ENCODE measurements at regions of chr13 and their contacts with region 1.

Region 1: DNA sequence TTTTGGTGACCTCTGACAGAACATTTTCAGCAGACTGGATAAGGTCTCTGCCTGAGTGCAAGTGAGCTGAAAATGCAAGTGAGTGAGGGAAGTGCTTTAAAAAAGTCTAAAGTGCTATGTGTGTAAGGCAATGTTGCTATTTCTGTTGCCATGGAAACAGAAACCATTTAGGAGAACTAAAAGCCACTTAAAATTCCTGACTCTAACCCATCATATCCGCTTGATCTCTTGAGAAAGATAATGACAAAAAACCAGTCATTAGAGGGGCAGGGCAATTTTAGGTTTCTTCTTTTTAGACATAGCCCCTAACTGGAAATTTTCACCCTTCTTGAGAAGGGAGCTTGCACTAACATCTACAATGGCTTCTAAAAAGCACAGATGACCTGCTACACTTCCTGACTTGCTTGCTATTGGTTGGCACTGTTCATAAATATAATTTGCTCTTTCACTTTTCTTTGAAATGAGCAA is at the start of gene CYSLTR2:
- DNase-seq: peak; percentile 28
- H3K4me3 Mint-ChIP-seq: peak within 1 kb of the TSS; percentile 79
- H3K27ac Mint-ChIP-seq: peak within 1 kb of the TSS; percentile 84
- H3K4me1 Mint-ChIP-seq: peaks cover 41% of the 10 kb centered on the region
- H3K27me3 Mint-ChIP-seq: no peaks in the 10 kb centered on the region
- total RNA-seq, gene CYSLTR2: 3.2 and 3.7 TPM in 2 replicates

Region 2: DNA sequence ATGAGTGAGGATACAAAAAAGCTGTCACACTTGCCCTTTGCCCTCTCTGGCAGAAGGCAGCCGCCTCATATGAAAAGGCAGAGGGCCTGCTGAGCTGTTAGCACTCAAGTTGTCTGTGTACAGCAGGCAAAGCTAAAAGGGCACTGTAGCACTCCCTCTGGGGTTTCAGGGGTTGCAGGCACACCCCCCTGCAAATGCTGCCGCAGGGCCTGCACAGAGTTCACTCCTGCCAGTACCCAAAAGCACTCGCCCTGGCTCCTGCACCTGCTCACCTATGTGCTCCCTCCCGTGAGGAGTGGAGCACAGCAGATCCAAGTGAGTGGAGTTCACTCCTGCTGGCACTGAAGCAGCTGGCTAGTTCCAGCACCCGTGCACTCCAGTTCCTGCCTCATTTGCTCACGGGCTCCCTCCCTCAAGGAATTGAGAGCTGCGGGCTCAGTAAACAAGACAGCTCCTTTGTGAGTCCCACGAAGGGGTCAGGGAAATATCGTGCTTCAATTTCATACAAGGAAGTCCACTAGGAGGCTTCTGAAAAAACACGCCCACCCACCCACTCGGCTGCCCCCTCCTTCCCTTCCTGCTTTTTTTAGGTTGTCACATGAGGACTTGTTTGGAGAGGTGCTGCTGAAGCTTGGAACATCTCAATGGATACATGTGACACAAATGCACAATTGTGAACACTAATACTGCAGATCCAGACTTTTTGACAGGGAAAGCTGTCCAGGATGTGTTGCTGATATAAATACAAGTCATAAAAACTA is 110.7 kb before region 1 on chr13:
- intact Hi-C with region 1: no loop called
- DNase-seq: no peak
- H3K4me3 Mint-ChIP-seq: no peak overlapping the region
- H3K27ac Mint-ChIP-seq: no peak overlapping the region
- H3K4me1 Mint-ChIP-seq: peaks cover 3% of the 10 kb centered on the region
- H3K27me3 Mint-ChIP-seq: peaks cover 17% of the 10 kb centered on the region

Region 3: DNA sequence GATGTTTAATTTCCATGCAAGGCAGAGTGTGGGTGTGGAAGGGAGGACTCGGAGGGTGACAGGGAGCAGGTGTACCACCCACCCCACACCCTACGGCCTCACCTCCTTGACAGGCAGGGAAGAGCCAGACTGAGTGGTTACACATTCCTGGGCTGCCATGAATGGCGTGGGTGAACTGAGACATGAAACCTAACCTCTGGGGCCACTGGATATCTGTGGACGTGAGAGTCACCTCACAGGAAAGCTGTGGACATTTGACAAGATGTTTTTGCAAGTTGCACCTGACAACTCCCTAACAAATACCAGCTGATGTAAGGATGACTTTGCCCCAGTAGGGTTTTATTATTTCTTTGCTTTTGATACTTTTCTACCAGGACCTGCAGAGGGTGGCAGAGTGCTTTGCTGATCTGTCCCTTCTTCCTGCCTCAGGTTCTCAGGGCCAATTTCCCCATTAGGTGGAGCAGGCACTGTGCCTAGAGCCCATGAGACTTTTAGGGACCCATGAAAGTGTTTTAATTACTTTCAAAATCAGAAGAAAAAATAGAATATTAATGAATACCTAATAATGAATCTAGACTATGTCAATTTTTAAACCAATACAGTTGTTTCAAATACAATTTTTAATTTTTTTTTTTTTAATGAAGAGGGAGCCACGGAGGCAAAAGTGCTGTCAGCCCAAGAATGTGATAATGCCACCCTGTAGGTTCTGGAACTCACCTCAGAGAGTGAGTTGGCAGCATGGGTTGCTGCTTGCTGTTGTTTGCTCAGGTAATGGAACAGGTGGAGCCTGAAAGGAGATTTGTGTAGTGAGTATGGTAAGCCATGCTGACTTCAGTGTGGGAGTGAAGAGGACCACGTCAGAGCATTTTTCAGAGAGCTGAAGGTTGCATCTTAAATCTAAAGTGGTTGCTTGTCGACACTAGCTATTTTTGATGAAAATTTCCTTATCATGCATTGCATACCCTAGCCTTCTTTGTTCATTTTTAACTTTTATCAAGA is 57.8 kb before region 1 on chr13:
- intact Hi-C with region 1: loop called (anchors 10 kb)
- DNase-seq: peak; percentile 32
- H3K4me3 Mint-ChIP-seq: no peak overlapping the region
- H3K27ac Mint-ChIP-seq: no peak overlapping the region
- H3K4me1 Mint-ChIP-seq: peaks cover 3% of the 10 kb centered on the region
- H3K27me3 Mint-ChIP-seq: peaks cover 5% of the 10 kb centered on the region

Region 4: DNA sequence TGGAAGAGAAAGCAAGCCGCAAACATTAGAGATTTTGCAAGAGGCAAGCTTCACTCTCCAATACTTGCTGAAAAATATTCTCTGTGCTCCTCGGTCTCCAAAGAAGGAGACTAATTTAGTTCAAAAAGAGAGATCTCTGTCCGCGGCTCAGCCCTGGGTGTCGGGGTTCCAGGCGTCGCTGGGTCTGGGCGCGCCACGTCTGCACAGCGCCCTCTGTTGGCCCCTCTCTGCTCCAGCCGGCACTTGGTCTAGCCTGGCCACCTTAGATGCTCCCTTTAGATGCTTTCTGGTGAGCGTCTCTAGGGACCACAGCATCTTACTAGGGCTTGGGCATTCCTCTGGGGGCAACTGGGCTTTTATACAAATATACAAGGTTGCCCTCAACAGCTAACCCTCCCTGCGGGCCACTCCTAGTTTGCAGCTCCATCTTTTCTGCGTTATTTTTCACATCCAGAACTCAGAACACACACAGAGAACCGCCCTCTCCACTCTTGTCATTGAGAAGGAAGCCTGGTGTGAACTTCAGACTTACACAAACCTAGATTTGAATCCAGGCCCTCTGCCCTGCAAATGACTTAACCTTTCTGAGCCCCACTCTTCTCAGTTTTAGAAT is 78.6 kb after region 1 on chr13:
- intact Hi-C with region 1: loop called (anchors 5 kb)
- DNase-seq: peak; percentile 43
- H3K4me3 Mint-ChIP-seq: peak overlapping the region; percentile 65
- H3K27ac Mint-ChIP-seq: no peak overlapping the region
- H3K4me1 Mint-ChIP-seq: peaks cover 6% of the 10 kb centered on the region
- H3K27me3 Mint-ChIP-seq: peaks cover 9% of the 10 kb centered on the region

Region 5: GRCh38 chr13:48749699-48750473 is 96.4 kb after region 1 on chr13:
- intact Hi-C with region 1: loop called (anchors 5 kb)
- DNase-seq: peak; percentile 46
- H3K4me3 Mint-ChIP-seq: no peak overlapping the region
- H3K27ac Mint-ChIP-seq: peak overlapping the region; percentile 70
- H3K4me1 Mint-ChIP-seq: peaks cover 13% of the 10 kb centered on the region
- H3K27me3 Mint-ChIP-seq: peaks cover 2% of the 10 kb centered on the region

Measured in activated T-helper 2 cell treated with anti-CD3 and anti-CD28 coated beads, Interferon-gamma antibody, Interleukin-2, Interleukin-4, amounts not matched to agents 10 μg/mL and 5 μg/mL and 100 μg/mL, durations not matched to agents 14 hours and 24 hours and 36 hours (primary cell).